Naive thymus-derived CD4-positive, alpha-beta T cell (primary cell): ENCODE measurements at regions of chr16 and their contacts with region 1.

Region 1: GRCh38 chr16:20900299-20901067 is at the starts of genes DCUN1D3 and LYRM1:
- DNase-seq: peak; percentile 65 to 90 (median 79)
- ATAC-seq: peak; percentile 80
- H3K4me3 ChIP-seq: peak within 1 kb of the TSS; percentile 88
- H3K4me3 Mint-ChIP-seq: peak within 1 kb of the TSS; percentile 87 to 99 (median 96)
- H3K27ac ChIP-seq: peak within 1 kb of the TSS; percentile 97
- H3K27ac Mint-ChIP-seq: peak within 1 kb of the TSS; percentile 94 to 99 (median 97)
- H3K4me1 ChIP-seq: peaks cover 23 to 29% of the 10 kb centered on the region in 2 donors
- H3K4me1 Mint-ChIP-seq: peaks cover 52 to 76% (median 71%) of the 10 kb centered on the region in 7 donors
- H3K27me3 ChIP-seq: no peaks in the 10 kb centered on the region
- H3K27me3 Mint-ChIP-seq: no peaks in the 10 kb centered on the region
- total RNA-seq, gene DCUN1D3: 4.0 to 15.7 (median 6.5) TPM
- total RNA-seq, gene LYRM1: 13.4 to 29.1 (median 20.0) TPM

Region 2: DNA sequence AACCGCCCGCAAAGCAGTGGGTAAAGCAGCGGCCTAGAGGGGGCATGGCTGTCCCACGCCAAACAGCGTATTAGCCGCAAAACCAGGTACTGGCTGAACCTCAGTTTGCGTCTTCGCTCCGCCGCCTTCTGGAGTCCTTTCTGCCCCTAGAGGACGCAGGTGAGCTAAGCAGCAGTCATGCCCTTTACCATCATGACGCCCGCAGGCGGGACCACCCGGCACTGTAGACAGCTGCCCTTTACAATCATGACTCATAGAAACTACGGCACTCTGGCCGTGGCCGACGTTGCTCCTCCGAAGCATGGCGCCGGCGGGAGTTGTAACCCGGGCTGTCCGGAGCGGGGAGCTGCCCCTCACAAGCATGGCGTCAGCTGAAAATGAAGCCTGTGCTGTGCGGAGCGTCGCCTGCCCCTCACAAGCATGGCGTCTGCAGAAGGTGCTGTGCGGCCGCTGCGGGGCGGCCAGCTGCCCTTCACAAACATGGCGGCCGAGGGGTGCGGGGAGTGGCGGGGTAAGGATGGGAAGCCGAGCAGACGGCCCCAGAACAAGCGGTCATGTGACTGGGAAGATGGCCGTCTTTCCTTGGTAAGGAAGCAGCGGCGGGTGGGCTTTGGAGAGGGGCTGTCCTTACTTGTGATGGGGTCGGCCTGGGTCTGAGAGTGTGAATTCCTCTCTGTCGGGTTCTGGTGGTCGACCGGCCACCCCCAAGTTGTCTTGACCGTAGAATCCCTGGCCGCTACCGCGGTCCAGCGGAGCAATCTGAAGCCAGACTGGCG is 1345.1 kb before region 1 on chr16 and contains the start of gene VPS35L:
- CTCF ChIA-PET with region 1: no interaction called
- POLR2A ChIA-PET with region 1: no interaction called
- intact Hi-C with region 1: loop called in 1 of 2 experiments (anchors 5 kb)
- DNase-seq: peak; percentile 92 to 97 (median 95)
- ATAC-seq: peak; percentile 98
- H3K4me3 ChIP-seq: peak within 1 kb of the TSS; percentile 86
- H3K4me3 Mint-ChIP-seq: peak within 1 kb of the TSS; percentile 91 to 100 (median 97)
- H3K27ac ChIP-seq: peak within 1 kb of the TSS; percentile 78
- H3K27ac Mint-ChIP-seq: peak within 1 kb of the TSS; percentile 92 to 98 (median 95)
- H3K4me1 ChIP-seq: peaks cover 4 to 13% of the 10 kb centered on the region in 2 donors
- H3K4me1 Mint-ChIP-seq: peaks cover 0 to 30% (median 24%) of the 10 kb centered on the region in 7 donors
- H3K27me3 ChIP-seq: no peaks in the 10 kb centered on the region
- H3K27me3 Mint-ChIP-seq: no peaks in the 10 kb centered on the region
- total RNA-seq, gene VPS35L: 38.6 to 51.1 (median 46.6) TPM

Region 3: GRCh38 chr16:20806168-20807050 is 94.1 kb before region 1 on chr16 and contains the starts of genes ERI2 and REXO5:
- CTCF ChIA-PET with region 1: no interaction called
- POLR2A ChIA-PET with region 1: interaction called, 3 read pairs
- intact Hi-C with region 1: loop called (anchors 1 to 5 kb)
- DNase-seq: peak; percentile 47 to 77 (median 65)
- ATAC-seq: peak; percentile 92
- H3K4me3 ChIP-seq: peak within 1 kb of the TSS; percentile 91
- H3K4me3 Mint-ChIP-seq: peak within 1 kb of the TSS; percentile 93 to 100 (median 96)
- H3K27ac ChIP-seq: peak within 1 kb of the TSS; percentile 73
- H3K27ac Mint-ChIP-seq: peak within 1 kb of the TSS; percentile 60 to 99 (median 93)
- H3K4me1 ChIP-seq: peaks cover 8 to 10% of the 10 kb centered on the region in 2 donors
- H3K4me1 Mint-ChIP-seq: peaks cover 7 to 36% (median 22%) of the 10 kb centered on the region in 7 donors
- H3K27me3 ChIP-seq: no peaks in the 10 kb centered on the region
- H3K27me3 Mint-ChIP-seq: no peaks in the 10 kb centered on the region
- total RNA-seq, gene ERI2: 2.4 to 10.4 (median 3.6) TPM
- total RNA-seq, gene REXO5: 0.35 to 9.5 (median 1.6) TPM

Region 4: GRCh38 chr16:20883558-20884556 is 16.6 kb before region 1 on chr16:
- CTCF ChIA-PET with region 1: no interaction called
- POLR2A ChIA-PET with region 1: interaction called, 6 read pairs
- intact Hi-C with region 1: loop called in 1 of 2 experiments (anchors 2 kb)
- DNase-seq: no peak
- ATAC-seq: no peak
- H3K4me3 ChIP-seq: no peak overlapping the region
- H3K4me3 Mint-ChIP-seq: peak overlapping the region in 1 of 10 donors; percentile 58
- H3K27ac ChIP-seq: no peak overlapping the region
- H3K27ac Mint-ChIP-seq: peak overlapping the region in 4 of 9 donors; percentile 25 to 68 (median 42)
- H3K4me1 ChIP-seq: peaks cover 0 to 4% of the 10 kb centered on the region in 2 donors
- H3K4me1 Mint-ChIP-seq: peaks cover 7 to 47% (median 22%) of the 10 kb centered on the region in 7 donors
- H3K27me3 ChIP-seq: no peaks in the 10 kb centered on the region
- H3K27me3 Mint-ChIP-seq: no peaks in the 10 kb centered on the region

Region 5: DNA sequence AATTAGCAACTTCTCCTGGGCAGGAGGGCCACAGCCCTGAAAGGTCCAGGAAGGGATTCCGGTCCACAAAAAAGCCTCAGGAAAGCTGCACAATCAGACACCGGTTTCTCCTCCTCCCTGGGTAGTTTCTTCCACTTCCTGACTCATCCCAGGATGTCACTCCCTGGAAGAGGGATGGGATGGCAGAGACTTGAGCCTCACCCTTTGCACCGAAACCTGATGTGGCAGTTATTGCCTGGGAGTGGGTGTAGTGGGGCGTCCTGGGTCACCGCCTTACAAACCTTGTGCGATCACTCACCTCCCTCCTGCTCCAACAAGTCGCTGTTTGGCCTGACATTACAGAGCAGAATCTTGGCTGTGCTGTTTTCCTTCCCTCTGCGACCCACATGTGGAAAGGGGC is 70.9 kb after region 1 on chr16:
- CTCF ChIA-PET with region 1: no interaction called
- POLR2A ChIA-PET with region 1: no interaction called
- intact Hi-C with region 1: no loop called
- DNase-seq: no peak
- ATAC-seq: no peak
- H3K4me3 ChIP-seq: no peak overlapping the region
- H3K4me3 Mint-ChIP-seq: no peak overlapping the region
- H3K27ac ChIP-seq: no peak overlapping the region
- H3K27ac Mint-ChIP-seq: no peak overlapping the region
- H3K4me1 ChIP-seq: no peaks in the 10 kb centered on the region
- H3K4me1 Mint-ChIP-seq: peaks cover 0 to 6% (median 0%) of the 10 kb centered on the region in 7 donors
- H3K27me3 ChIP-seq: no peaks in the 10 kb centered on the region
- H3K27me3 Mint-ChIP-seq: peaks cover 2 to 9% (median 4%) of the 10 kb centered on the region in 5 donors

Region 6: GRCh38 chr16:21101631-21102420 is 201.3 kb after region 1 on chr16:
- CTCF ChIA-PET with region 1: no interaction called
- POLR2A ChIA-PET with region 1: no interaction called
- intact Hi-C with region 1: no loop called
- DNase-seq: peak in 2 of 9 donors; percentile 2 to 6
- ATAC-seq: no peak
- H3K4me3 ChIP-seq: no peak overlapping the region
- H3K4me3 Mint-ChIP-seq: no peak overlapping the region
- H3K27ac ChIP-seq: no peak overlapping the region
- H3K27ac Mint-ChIP-seq: no peak overlapping the region
- H3K4me1 ChIP-seq: no peaks in the 10 kb centered on the region
- H3K4me1 Mint-ChIP-seq: peaks cover 0 to 2% (median 0%) of the 10 kb centered on the region in 7 donors
- H3K27me3 ChIP-seq: no peaks in the 10 kb centered on the region
- H3K27me3 Mint-ChIP-seq: peaks cover 9 to 40% (median 20%) of the 10 kb centered on the region in 5 donors

Region 7: DNA sequence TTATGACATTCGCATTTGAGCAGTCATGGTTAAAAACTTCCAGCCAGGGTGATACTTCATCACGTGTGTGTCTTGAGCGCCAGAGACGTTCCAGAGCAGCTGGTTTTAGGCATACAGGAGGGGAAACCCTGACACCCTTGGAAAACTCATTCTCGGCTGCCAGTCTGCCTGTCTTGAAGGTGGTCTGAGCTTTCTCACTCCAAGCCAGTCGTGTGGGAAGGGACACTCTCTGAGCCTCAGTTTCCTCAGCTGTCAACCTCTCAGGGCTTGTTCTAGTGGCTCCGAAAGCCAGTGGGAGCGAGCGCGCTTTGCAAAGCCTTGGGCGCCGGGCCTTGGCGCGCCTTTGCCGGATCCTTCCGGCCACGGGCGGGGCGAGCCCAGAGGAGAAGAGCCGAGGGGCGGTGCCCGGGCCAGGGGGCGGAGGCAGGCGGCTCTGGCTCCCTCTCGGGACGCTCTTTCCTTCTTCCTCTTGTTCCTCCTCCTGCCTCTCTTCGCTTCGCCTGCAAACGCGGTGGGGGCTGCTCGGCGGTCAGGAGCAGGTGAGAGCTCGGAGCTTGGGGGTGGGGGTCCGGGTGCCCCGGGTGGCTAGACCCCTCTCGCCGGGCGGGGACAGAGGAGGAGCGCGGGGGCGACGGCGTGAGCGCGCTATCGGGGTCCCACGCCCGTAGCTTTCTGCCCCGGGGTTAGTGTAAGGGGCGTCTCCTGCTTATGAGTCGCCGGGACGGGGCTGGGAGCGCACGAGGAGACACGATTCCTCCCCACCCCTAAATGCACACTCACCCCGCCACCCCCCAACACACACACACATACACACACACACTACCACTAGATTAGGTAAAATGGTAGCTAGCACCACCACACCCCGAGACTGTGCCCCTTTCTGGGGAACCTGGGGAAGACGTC is 258.0 kb after region 1 on chr16 and contains the start of gene LDAF1:
- CTCF ChIA-PET with region 1: interaction called, 3 read pairs
- POLR2A ChIA-PET with region 1: no interaction called
- intact Hi-C with region 1: loop called (anchors 2 to 5 kb)
- DNase-seq: peak; percentile 59 to 86 (median 74)
- ATAC-seq: peak; percentile 97
- H3K4me3 ChIP-seq: peak within 1 kb of the TSS; percentile 62
- H3K4me3 Mint-ChIP-seq: peak within 1 kb of the TSS; percentile 88 to 96 (median 94)
- H3K27ac ChIP-seq: peak within 1 kb of the TSS; percentile 65
- H3K27ac Mint-ChIP-seq: peak within 1 kb of the TSS; percentile 60 to 91 (median 71)
- H3K4me1 ChIP-seq: peaks cover 9 to 12% of the 10 kb centered on the region in 2 donors
- H3K4me1 Mint-ChIP-seq: peaks cover 10 to 35% (median 30%) of the 10 kb centered on the region in 7 donors
- H3K27me3 ChIP-seq: no peaks in the 10 kb centered on the region
- H3K27me3 Mint-ChIP-seq: no peaks in the 10 kb centered on the region
- total RNA-seq, gene LDAF1: 8.2 to 16.9 (median 11.0) TPM

Region 8: GRCh38 chr16:22353191-22353919 is 1452.9 kb after region 1 on chr16:
- CTCF ChIA-PET with region 1: no interaction called
- POLR2A ChIA-PET with region 1: no interaction called
- intact Hi-C with region 1: loop called in 1 of 2 experiments (anchors 10 kb)
- DNase-seq: peak in 2 of 9 donors; percentile 36 to 48
- ATAC-seq: peak; percentile 63
- H3K4me3 ChIP-seq: no peak overlapping the region
- H3K4me3 Mint-ChIP-seq: peak overlapping the region; percentile 8 to 62 (median 39)
- H3K27ac ChIP-seq: peak overlapping the region; percentile 48
- H3K27ac Mint-ChIP-seq: peak overlapping the region; percentile 69 to 88 (median 83)
- H3K4me1 ChIP-seq: peaks cover 44 to 52% of the 10 kb centered on the region in 2 donors
- H3K4me1 Mint-ChIP-seq: peaks cover 28 to 70% (median 61%) of the 10 kb centered on the region in 7 donors
- H3K27me3 ChIP-seq: no peaks in the 10 kb centered on the region
- H3K27me3 Mint-ChIP-seq: no peaks in the 10 kb centered on the region